Transverse colon (tissue), 4 donors: ENCODE measurements at regions of chr11 and their contacts with region 1.

Region 1: GRCh38 chr11:113202431-113202830 is 112.0 kb upstream of the TTC12 start:
- DNase-seq: no peak
- H3K4me3 ChIP-seq: no peak overlapping the region
- H3K27ac ChIP-seq: no peak overlapping the region
- H3K4me1 ChIP-seq: no peaks in the 10 kb centered on the region
- H3K27me3 ChIP-seq: no peaks in the 10 kb centered on the region
- CTCF ChIP-seq: no peak
- EP300 ChIP-seq: no peak
- POLR2A ChIP-seq: no peak

Region 2: GRCh38 chr11:113106507-113106906 is 95.9 kb before region 1 on chr11:
- in situ Hi-C with region 1: no loop called
- intact Hi-C with region 1: no loop called
- DNase-seq: no peak
- H3K4me3 ChIP-seq: no peak overlapping the region
- H3K27ac ChIP-seq: no peak overlapping the region
- H3K4me1 ChIP-seq: no peaks in the 10 kb centered on the region
- H3K27me3 ChIP-seq: no peaks in the 10 kb centered on the region
- CTCF ChIP-seq: no peak
- EP300 ChIP-seq: no peak
- POLR2A ChIP-seq: no peak

Region 3: DNA sequence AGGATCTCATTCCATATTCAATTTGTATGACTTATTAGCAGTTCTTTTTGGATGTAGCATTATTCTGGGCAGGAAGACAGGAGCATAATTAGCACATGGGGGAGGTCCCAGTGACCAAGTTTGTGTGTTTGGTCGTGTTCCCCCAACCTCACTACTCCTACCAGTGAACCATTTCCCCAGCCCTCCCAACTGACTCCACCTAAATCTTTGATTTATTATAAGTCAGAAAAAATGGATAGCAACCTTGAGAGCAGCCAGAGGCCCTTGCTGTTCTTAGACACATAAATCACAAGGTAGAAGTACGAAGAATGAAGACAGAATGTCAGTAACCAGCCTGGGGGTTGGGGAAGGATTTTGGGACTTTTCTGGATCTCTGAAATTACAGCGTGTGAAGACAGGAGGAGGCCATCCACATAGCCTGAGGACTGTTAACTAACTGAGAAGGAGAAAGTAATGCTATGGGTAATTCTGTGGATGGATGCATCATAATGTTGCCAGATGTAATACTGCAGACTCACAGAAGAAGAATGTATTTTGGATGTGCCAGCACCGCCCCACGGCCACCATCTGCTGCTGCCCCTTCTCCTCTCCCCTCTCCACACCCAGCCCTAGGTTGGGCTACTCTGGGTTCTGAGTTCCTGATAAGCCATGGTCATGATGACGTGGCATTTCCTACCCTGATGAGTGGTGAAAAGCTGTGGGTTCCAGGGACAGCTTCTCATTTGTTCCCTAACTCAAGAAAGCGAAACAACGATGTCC is 12.3 kb before region 1 on chr11:
- in situ Hi-C with region 1: no loop called
- intact Hi-C with region 1: loop called (anchors 1 kb)
- DNase-seq: no peak
- H3K4me3 ChIP-seq: no peak overlapping the region
- H3K27ac ChIP-seq: no peak overlapping the region
- H3K4me1 ChIP-seq: peaks cover 0 to 13% (median 2%) of the 10 kb centered on the region in 4 donors
- H3K27me3 ChIP-seq: no peaks in the 10 kb centered on the region
- CTCF ChIP-seq: no peak
- EP300 ChIP-seq: no peak
- POLR2A ChIP-seq: no peak

Region 4: GRCh38 chr11:113242767-113243397 is 40.5 kb after region 1 on chr11:
- in situ Hi-C with region 1: no loop called
- intact Hi-C with region 1: no loop called
- DNase-seq: no peak
- H3K4me3 ChIP-seq: peak overlapping the region in 3 of 4 donors; percentile 16 to 33 (median 24)
- H3K27ac ChIP-seq: peak overlapping the region; percentile 63 to 76 (median 71)
- H3K4me1 ChIP-seq: peaks cover 0 to 18% (median 6%) of the 10 kb centered on the region in 4 donors
- H3K27me3 ChIP-seq: peaks cover 5% of the 10 kb centered on the region
- CTCF ChIP-seq: no peak
- EP300 ChIP-seq: no peak
- POLR2A ChIP-seq: no peak

Region 5: GRCh38 chr11:113350336-113351067 is 148.1 kb after region 1 on chr11:
- in situ Hi-C with region 1: no loop called
- intact Hi-C with region 1: no loop called
- DNase-seq: no peak
- H3K4me3 ChIP-seq: no peak overlapping the region
- H3K27ac ChIP-seq: no peak overlapping the region
- H3K4me1 ChIP-seq: no peaks in the 10 kb centered on the region
- H3K27me3 ChIP-seq: no peaks in the 10 kb centered on the region
- CTCF ChIP-seq: no peak
- EP300 ChIP-seq: no peak
- POLR2A ChIP-seq: no peak